PC-9 (cell line): ENCODE measurements at regions of chr7 and their contacts with region 1.

Region 1: DNA sequence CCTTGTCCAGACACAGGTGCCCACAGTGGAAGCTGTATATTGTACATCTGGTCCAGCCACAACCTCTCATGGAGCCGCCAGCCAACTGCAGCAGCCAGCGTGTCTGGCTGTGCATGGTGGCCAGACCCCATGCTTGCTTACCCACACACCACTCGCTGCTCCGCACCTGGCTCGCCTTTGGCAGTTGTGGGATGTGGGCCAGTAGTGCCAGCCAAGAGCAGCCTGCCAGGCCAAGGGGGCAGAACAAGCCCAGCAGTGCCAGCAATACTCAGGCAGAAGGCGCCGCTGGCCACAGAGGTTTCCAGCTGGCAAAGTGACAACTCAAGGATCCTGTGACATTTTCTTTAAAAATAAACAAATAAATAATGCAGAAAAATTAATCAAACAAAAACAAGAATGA is 11.7 kb upstream of the TMEM243 start:
- DNase-seq: no peak
- H3K4me3 ChIP-seq: no peak overlapping the region
- H3K27ac ChIP-seq: no peak overlapping the region
- H3K4me1 ChIP-seq: no peaks in the 10 kb centered on the region
- H3K27me3 ChIP-seq: no peaks in the 10 kb centered on the region
- CTCF ChIP-seq: no peak

Region 2: GRCh38 chr7:86914551-86914950 is 316.7 kb before region 1 on chr7:
- CTCF ChIA-PET with region 1: no interaction called
- POLR2A ChIA-PET with region 1: no interaction called
- intact Hi-C with region 1: loop called (anchors 5 kb)
- DNase-seq: no peak
- H3K4me3 ChIP-seq: no peak overlapping the region
- H3K27ac ChIP-seq: no peak overlapping the region
- H3K4me1 ChIP-seq: no peaks in the 10 kb centered on the region
- H3K27me3 ChIP-seq: no peaks in the 10 kb centered on the region
- CTCF ChIP-seq: peak; percentile 75

Region 3: DNA sequence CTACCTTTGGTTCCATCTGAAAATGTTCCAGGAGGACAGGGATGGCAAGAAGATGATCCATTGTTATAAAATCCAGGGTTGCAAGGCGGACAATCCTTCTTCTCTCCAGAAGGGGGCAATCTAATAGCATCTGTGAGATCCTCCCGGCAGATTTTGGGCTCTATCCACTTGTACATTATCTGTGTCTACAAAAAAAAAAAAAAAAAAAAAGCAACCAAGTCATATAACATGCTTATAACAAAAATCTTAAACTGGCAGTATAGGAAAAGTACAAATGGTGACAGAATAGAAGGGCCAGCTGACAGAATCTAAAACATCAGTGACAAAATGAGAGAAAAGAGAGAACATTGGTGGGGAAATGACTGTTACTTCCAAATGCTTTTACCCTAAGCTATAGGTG is 304.5 kb before region 1 on chr7:
- CTCF ChIA-PET with region 1: no interaction called
- POLR2A ChIA-PET with region 1: no interaction called
- intact Hi-C with region 1: loop called (anchors 2 kb)
- DNase-seq: peak in 1 of 2 experiments; percentile 28
- H3K4me3 ChIP-seq: no peak overlapping the region
- H3K27ac ChIP-seq: no peak overlapping the region
- H3K4me1 ChIP-seq: no peaks in the 10 kb centered on the region
- H3K27me3 ChIP-seq: no peaks in the 10 kb centered on the region
- CTCF ChIP-seq: peak; percentile 78

Region 4: DNA sequence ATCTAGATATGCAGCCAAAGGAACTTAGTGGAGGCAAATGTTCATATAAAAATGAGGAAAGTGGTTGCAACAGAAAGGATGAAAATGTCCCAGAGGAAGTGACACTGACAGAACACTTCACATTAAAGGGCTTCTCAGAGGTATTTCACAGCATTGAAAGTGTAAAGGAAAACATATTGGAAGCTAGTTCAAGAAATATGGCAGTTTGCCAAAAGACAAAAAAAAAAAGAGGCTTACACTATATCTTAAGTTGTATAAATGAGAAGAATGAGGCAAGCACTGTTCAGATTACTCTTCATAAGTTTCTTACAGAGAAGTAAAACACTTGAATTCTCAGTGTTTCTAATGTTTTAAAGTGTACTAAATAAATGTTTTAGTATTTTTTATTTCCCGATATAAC is 417.1 kb after region 1 on chr7:
- CTCF ChIA-PET with region 1: no interaction called
- POLR2A ChIA-PET with region 1: no interaction called
- intact Hi-C with region 1: no loop called
- DNase-seq: no peak
- H3K4me3 ChIP-seq: no peak overlapping the region
- H3K27ac ChIP-seq: no peak overlapping the region
- H3K4me1 ChIP-seq: no peaks in the 10 kb centered on the region
- H3K27me3 ChIP-seq: no peaks in the 10 kb centered on the region
- CTCF ChIP-seq: no peak